Cardiac septum (tissue), 1 donor: ENCODE measurements at regions of chr21 and their contacts with region 1.

Region 1: GRCh38 chr21:42258153-42258884 is 39.4 kb downstream of the ABCG1 start:
- DNase-seq: peak; percentile 89

Region 2: DNA sequence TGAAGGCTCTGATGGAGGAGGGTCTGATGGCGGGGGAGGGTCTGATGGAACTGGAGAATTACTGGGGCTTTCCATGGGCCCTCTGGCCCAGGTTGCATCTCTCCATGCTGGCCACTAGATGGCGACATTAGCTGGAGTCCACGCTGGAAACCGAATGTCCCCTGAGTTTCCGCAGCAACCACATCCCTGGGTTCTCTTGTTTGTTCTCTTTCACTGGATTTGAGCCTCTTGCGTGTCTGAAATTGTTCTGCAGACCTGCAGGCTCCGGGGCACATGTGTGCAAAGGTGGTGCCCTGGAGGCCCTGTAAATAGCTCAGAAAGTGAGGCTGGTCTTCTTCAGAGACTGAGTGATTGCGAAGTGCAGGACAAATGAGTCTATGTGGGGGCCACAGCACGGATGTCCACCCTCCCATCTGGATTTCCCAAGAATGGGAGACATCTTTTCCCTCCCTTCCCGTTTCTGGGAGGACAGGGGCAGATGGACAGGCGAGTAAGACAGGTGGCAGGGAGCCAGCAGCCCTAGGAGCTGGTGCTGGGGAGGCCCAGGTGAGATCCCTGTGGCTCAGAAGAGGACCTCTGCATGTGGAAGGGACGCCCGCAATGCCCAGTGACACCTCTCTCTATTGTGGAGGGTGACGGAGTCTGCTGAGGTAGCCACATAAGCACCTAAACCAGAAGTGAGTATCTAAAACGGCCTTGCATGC is 112.6 kb before region 1 on chr21:
- intact Hi-C with region 1: loop called (anchors 5 kb)
- DNase-seq: peak; percentile 84

Region 3: GRCh38 chr21:42164064-42164789 is 94.1 kb before region 1 on chr21:
- intact Hi-C with region 1: loop called (anchors 2 kb)
- DNase-seq: peak; percentile 84

Region 4: GRCh38 chr21:42220138-42220701 is 38.1 kb before region 1 on chr21:
- intact Hi-C with region 1: loop called (anchors 2 kb)
- DNase-seq: peak; percentile 75

Region 5: DNA sequence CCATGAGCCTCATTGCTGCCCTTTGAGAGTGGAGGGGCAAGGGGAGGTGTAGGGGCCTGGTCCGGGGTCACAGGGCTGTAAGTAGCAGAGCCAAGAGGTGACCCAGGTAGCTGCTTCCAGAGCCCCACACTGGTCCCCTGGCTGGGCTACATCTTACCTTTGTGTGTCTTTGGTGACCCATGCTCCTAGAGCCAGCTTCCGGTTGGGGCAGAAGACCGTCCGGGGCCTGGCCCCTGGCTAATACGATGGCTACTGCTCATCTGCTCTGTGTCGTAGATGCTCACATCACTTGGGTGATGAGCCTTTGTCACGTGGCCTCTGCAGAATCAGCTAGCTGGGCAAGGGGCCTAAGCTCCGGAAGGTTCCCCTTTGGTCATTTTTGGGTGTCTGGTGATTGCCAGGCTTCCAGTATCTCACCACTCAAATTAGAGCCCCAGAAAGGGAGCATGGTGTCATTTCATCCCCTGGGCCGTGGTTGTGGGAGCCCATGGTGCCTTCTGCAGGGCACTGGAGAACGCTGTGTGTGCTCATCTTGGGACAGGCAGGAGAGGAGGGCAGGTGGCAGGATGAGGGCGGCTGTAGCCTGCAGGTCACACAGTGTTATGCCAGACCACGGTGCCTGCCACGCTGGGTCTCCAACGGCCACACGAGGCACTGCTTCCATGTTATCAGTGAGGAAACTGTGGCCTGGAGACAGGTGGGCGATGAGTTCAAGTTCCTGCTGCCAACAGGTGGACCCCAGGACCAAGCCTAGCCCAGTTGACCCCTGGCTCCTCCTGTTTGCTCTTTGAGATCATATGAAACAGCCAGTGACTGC is 18.6 kb before region 1 on chr21:
- intact Hi-C with region 1: loop called (anchors 2 kb)
- DNase-seq: no peak